HEK293 (cell line): ENCODE measurements at regions of chr14 and their contacts with region 1.

Region 1: GRCh38 chr14:67426983-67427606 is 15.1 kb upstream of the PLEK2 start:
- H3K4me3 ChIP-seq: no peak overlapping the region
- H3K27ac ChIP-seq: no peak overlapping the region
- H3K4me1 ChIP-seq: no peaks in the 10 kb centered on the region
- CTCF ChIP-seq: peak; percentile 60

Region 2: DNA sequence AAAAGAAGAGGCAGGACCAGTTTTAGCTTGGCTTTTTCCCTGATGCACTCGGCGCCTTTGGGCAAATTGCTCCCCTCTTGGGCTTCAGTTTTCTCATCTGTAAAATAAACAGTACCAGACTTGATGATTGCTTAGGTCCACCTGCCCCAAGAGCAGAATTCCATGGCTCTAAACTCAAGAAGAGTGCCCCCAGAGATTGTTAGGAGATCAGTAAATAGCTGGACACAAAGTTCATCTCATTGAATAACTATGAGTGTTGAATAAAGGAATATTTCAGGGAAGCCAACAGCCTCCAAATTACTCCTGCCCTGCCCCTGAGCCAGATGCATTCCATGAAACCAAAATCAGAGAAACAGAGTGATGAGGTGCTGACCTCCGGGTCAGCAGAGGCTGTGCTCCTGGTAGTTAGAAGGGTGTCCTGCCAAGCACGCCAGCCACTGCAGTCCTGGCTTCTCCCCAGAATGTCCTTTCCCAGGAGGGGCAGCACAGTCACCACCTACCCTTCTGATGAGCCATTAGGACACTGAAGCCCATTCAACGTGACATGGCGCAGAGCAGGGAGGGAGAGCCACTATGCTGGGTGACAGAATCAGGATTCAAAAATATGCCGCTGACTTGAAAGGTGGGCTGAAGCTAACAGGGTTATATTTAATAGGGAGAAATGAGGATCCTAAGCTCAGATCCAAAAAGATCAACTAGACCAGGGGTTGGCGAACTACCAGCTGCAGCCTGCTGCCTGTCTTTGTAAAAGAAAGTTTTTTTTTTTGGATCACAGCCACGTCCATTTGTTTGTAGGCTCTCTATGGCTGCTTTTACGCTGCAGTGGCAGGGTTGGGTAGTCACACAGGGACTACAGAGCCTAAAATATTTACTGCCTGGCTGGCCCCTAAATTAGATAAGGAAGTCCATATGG is 19.3 kb after region 1 on chr14:
- CTCF ChIA-PET with region 1: interaction called, 28 read pairs
- POLR2A ChIA-PET with region 1: no interaction called
- H3K4me3 ChIP-seq: no peak overlapping the region
- H3K27ac ChIP-seq: no peak overlapping the region
- H3K4me1 ChIP-seq: no peaks in the 10 kb centered on the region
- CTCF ChIP-seq: no peak

Region 3: GRCh38 chr14:67456732-67457131 is 29.6 kb after region 1 on chr14:
- CTCF ChIA-PET with region 1: interaction called, 12 read pairs
- POLR2A ChIA-PET with region 1: no interaction called
- H3K4me3 ChIP-seq: no peak overlapping the region
- H3K27ac ChIP-seq: no peak overlapping the region
- H3K4me1 ChIP-seq: no peaks in the 10 kb centered on the region
- CTCF ChIP-seq: no peak

Region 4: GRCh38 chr14:67532998-67533753 is 106.1 kb after region 1 on chr14 and contains the start of gene PLEKHH1:
- CTCF ChIA-PET with region 1: interaction called, 20 read pairs
- POLR2A ChIA-PET with region 1: no interaction called
- H3K4me3 ChIP-seq: peak within 1 kb of the TSS; percentile 71
- H3K27ac ChIP-seq: peak within 1 kb of the TSS; percentile 94
- H3K4me1 ChIP-seq: no peaks in the 10 kb centered on the region
- CTCF ChIP-seq: no peak

Region 5: DNA sequence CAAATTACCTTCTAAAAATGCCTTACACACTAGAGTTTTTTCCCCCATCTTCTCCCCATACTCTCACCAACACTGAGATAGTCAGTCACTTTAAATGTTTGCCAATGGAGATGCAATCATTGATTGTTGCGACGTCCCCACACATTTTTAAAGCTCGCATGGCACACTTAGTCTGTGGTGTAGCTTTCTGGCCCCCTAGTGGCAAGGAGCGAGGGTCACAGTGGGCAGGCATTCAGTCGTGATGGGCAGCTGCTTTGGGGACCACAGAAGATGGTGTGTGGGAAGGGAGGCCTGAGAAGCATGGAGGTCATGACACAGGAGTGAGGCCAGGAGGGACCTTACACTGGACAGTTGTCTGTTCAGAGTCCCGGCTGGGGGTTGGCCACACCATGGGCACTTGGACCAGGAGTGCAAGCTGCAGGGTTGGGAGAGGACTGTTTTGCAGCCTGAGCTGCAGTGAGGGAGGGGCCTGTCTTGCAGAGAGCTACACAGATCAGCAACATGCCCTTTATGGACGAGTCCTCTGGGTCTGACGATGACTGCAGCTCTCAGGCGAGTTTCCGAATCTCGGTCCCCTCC is 144.3 kb after region 1 on chr14:
- CTCF ChIA-PET with region 1: interaction called, 97 read pairs
- POLR2A ChIA-PET with region 1: interaction called, 4 read pairs
- H3K4me3 ChIP-seq: no peak overlapping the region
- H3K27ac ChIP-seq: no peak overlapping the region
- H3K4me1 ChIP-seq: no peaks in the 10 kb centered on the region
- CTCF ChIP-seq: peak; percentile 62

Region 6: GRCh38 chr14:67583711-67584644 is 156.9 kb after region 1 on chr14:
- CTCF ChIA-PET with region 1: interaction called, 24 read pairs
- POLR2A ChIA-PET with region 1: no interaction called
- H3K4me3 ChIP-seq: no peak overlapping the region
- H3K27ac ChIP-seq: no peak overlapping the region
- H3K4me1 ChIP-seq: no peaks in the 10 kb centered on the region
- CTCF ChIP-seq: peak; percentile 77